OCI-LY7 (cell line): ENCODE measurements at regions of chr2 and their contacts with region 1.

Region 1: GRCh38 chr2:95121407-95122196 is at the start of gene MRPS5:
- DNase-seq: peak; percentile 86
- H3K4me3 ChIP-seq: peak within 1 kb of the TSS; percentile 88
- H3K27ac ChIP-seq: peak within 1 kb of the TSS; percentile 55
- H3K4me1 ChIP-seq: peaks cover 23% of the 10 kb centered on the region
- CTCF ChIP-seq: no peak
- total RNA-seq, gene MRPS5: 89.6 and 117 TPM in 2 replicates

Region 2: GRCh38 chr2:95138702-95139101 is 17.1 kb after region 1 on chr2:
- CTCF ChIA-PET with region 1: no interaction called
- POLR2A ChIA-PET with region 1: interaction called, 11 read pairs
- intact Hi-C with region 1: no loop called
- DNase-seq: no peak
- H3K4me3 ChIP-seq: no peak overlapping the region
- H3K27ac ChIP-seq: no peak overlapping the region
- H3K4me1 ChIP-seq: no peaks in the 10 kb centered on the region
- CTCF ChIP-seq: no peak

Region 3: DNA sequence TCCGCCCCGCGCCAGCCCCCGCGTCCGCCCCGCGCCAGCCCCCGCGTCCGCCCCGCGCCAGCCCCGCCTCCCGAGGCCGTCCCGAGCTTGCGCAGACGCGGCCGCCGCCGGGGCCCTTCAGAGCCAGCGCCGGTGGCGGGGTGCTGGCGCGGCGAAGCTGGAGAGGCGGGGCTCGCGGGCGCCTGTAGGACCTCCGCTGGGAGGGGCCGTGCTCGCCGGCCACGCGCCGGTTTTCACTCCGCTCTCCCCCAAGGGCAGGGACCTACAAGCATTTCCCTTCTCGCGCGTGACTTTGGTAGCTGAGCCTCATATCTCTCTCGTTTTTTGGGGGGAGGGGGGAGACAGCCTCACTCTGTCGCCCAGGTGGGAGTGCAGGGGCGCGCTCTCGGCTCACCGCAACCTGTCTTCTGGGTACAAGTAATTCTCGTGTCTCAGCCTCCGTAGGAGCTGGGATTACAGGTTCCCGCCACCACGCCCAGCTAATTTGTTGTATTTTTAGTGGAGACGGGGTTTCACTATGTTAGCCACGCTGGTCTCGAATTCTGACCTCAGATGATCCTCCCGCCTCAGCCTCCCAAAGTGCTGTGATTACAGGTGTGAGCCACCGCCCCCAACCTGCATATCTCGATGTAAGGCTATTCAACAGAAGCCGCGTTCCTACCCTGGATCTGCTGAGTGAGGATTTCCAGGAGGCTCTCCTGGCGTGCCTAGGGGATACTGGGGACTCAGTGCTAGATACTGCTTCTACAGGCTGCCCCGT is 38.3 kb after region 1 on chr2 and contains the start of gene ZNF514:
- CTCF ChIA-PET with region 1: no interaction called
- POLR2A ChIA-PET with region 1: interaction called, 20 read pairs
- intact Hi-C with region 1: no loop called
- DNase-seq: peak; percentile 68
- H3K4me3 ChIP-seq: peak within 1 kb of the TSS; percentile 68
- H3K27ac ChIP-seq: no peak within 1 kb of the TSS
- H3K4me1 ChIP-seq: peaks cover 14% of the 10 kb centered on the region
- CTCF ChIP-seq: no peak
- total RNA-seq, gene ZNF514: 6.2 and 9.7 TPM in 2 replicates

Region 4: DNA sequence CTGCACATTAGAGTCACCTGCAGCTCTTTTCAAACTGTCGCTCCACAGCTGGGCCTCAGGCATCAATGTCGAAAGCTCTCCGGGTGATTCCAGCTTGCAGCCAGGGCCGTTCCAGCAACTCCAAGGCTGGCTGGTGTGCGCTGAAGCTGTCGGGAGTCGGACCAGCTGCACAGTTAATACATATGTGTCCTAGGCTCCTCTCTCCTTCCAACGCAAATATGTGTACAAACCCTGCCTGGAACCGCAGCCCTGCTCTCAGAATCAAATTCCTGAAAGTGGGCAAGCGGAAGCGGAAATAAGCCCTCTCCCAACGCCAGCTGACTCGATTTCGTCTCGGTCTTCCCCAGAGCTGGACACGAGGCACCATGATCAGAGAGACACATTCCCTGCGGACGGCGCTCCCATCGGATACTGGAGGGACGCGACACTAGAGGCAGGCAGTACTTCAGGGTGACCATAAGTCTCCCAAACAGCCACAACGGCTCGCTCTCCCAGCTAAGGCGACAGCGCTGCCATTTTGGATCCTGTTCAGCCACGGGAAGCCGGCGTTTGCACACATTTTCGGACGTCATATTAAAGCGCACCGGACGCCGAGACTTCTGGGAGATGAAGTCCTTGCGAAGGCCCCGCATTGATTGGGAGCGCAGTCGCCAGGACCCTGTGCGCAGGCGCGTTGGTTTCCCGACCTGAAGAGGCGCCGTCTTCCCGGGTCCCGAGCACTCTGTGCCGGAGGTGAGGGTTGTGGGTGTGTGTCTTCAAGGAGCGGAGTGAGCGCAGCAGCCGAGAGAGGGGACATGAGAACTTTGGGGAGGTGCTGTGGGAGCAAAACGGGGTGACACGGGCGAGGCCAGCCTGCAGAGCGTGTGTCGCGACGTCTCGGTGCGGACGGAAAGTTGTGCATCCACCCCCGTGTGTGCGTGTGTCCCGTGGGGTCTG is 43.8 kb after region 1 on chr2 and contains the start of gene ZNF2:
- CTCF ChIA-PET with region 1: no interaction called
- POLR2A ChIA-PET with region 1: interaction called, 20 read pairs
- intact Hi-C with region 1: no loop called
- DNase-seq: peak; percentile 98
- H3K4me3 ChIP-seq: peak within 1 kb of the TSS; percentile 97
- H3K27ac ChIP-seq: peak within 1 kb of the TSS; percentile 46
- H3K4me1 ChIP-seq: peaks cover 17% of the 10 kb centered on the region
- CTCF ChIP-seq: no peak
- total RNA-seq, gene ZNF2: 1.6 and 4.6 TPM in 2 replicates